ENCODE measurements at regions of chr11 and their contacts with region 1.

Region 1: GRCh38 chr11:118689851-118690552 is 10.6 kb upstream of the TREH start:
- DNase-seq: peak; percentile 96
- H3K4me3 ChIP-seq: peak overlapping the region; percentile 62
- H3K27ac ChIP-seq: peak overlapping the region; percentile 86
- H3K4me1 ChIP-seq: peaks cover 17% of the 10 kb centered on the region
- H3K27me3 ChIP-seq: no peaks in the 10 kb centered on the region
- CTCF ChIP-seq: peak; percentile 90

Region 2: DNA sequence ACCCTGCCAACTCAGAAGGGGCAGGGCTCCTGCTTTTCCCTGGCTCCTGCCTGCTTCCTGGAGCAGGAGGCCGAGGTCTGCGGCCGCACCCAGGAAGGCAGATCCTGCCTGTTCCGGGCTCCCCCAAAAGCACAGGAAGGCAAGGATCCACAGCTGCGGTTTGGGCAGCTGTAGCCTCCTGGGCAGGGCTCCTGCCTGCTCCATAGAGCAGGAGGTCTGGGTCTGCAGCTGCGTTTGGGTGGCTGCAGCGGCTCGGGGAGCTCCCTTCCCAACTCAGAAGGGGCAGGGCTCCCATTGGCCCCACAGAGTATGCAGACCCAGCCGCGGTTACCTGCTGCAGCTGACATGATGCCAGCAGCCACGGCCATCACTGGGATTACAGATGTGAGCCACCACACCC is 271.6 kb after region 1 on chr11:
- intact Hi-C with region 1: loop called (anchors 10 kb)
- DNase-seq: no peak
- H3K4me3 ChIP-seq: no peak overlapping the region
- H3K27ac ChIP-seq: no peak overlapping the region
- H3K4me1 ChIP-seq: no peaks in the 10 kb centered on the region
- H3K27me3 ChIP-seq: no peaks in the 10 kb centered on the region
- CTCF ChIP-seq: no peak

Measured in left ventricle myocardium inferior (tissue), 1 donor.